Body of pancreas (tissue), 4 donors: ENCODE measurements at regions of chr6 and their contacts with region 1.

Region 1: GRCh38 chr6:111207141-111207850 is 120.0 kb downstream of the SLC16A10 start:
- DNase-seq: no peak
- ATAC-seq: no peak
- H3K4me3 ChIP-seq: no peak overlapping the region
- H3K27ac ChIP-seq: no peak overlapping the region
- H3K4me1 ChIP-seq: peaks cover 20% of the 10 kb centered on the region
- H3K27me3 ChIP-seq: no peaks in the 10 kb centered on the region
- CTCF ChIP-seq: no peak
- POLR2A ChIP-seq: no peak

Region 2: GRCh38 chr6:109743739-109744138 is 1463.6 kb before region 1 on chr6:
- intact Hi-C with region 1: no loop called
- DNase-seq: no peak
- ATAC-seq: no peak
- H3K4me3 ChIP-seq: no peak overlapping the region
- H3K27ac ChIP-seq: no peak overlapping the region
- H3K4me1 ChIP-seq: peaks cover 12% of the 10 kb centered on the region
- H3K27me3 ChIP-seq: no peaks in the 10 kb centered on the region
- CTCF ChIP-seq: no peak
- POLR2A ChIP-seq: no peak

Region 3: GRCh38 chr6:111011360-111012142 is 195.7 kb before region 1 on chr6:
- intact Hi-C with region 1: loop called (anchors 10 kb)
- DNase-seq: peak in 1 of 4 donors; percentile 14
- ATAC-seq: peak; percentile 67
- H3K4me3 ChIP-seq: no peak overlapping the region
- H3K27ac ChIP-seq: no peak overlapping the region
- H3K4me1 ChIP-seq: peaks cover 30% of the 10 kb centered on the region
- H3K27me3 ChIP-seq: no peaks in the 10 kb centered on the region
- CTCF ChIP-seq: peak in 6 of 7 experiments; percentile 29 to 76 (median 68)
- POLR2A ChIP-seq: no peak

Region 4: DNA sequence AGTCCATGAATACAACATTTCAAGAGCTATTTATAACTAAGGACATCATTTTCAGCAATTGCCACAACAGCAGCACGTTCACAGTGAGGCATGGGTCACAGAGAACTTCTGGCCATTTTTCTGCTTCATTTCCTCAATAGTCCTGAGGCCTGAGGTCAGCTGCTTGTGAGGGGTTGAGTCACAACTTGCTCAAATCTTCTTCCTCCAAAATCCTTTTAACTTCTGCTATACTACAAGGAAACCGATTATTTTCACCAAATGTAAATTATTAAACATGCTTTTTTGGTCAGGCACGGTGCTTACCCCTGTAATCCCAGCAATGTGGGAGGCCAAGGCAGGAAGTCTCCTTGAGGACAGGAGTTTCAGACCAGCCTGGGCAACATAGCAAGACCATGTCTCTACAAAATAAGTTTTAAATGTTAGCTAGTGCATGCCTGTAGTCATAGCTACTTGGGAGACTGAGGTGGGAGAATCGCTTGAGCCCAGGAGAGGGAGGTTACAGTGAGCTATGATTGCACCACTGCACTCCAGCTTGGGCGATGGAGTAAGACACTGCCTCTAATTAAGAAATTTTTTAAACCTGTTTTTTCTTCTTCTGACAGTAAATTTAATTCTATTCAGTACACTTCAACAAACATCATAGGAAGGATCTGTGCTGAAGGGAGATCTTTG is 131.1 kb before region 1 on chr6:
- intact Hi-C with region 1: loop called (anchors 10 kb)
- DNase-seq: peak in 1 of 4 donors; percentile 45
- ATAC-seq: no peak
- H3K4me3 ChIP-seq: no peak overlapping the region
- H3K27ac ChIP-seq: peak overlapping the region in 1 of 4 donors; percentile 58
- H3K4me1 ChIP-seq: peaks cover 20% of the 10 kb centered on the region
- H3K27me3 ChIP-seq: no peaks in the 10 kb centered on the region
- CTCF ChIP-seq: no peak
- POLR2A ChIP-seq: no peak